Activated CD4-positive, alpha-beta T cell treated with anti-CD3 and anti-CD28 coated beads for 36 hours (primary cell): ENCODE measurements at regions of chr13 and their contacts with region 1.

Region 1: GRCh38 chr13:46184277-46184699 is 2.3 kb upstream of the LCP1 start:
- DNase-seq: peak; percentile 89
- ATAC-seq: peak; percentile 61
- H3K4me3 Mint-ChIP-seq: peak overlapping the region; percentile 97
- H3K27ac Mint-ChIP-seq: peak overlapping the region; percentile 98
- H3K4me1 Mint-ChIP-seq: peaks cover 35% of the 10 kb centered on the region
- H3K27me3 Mint-ChIP-seq: no peaks in the 10 kb centered on the region

Region 2: DNA sequence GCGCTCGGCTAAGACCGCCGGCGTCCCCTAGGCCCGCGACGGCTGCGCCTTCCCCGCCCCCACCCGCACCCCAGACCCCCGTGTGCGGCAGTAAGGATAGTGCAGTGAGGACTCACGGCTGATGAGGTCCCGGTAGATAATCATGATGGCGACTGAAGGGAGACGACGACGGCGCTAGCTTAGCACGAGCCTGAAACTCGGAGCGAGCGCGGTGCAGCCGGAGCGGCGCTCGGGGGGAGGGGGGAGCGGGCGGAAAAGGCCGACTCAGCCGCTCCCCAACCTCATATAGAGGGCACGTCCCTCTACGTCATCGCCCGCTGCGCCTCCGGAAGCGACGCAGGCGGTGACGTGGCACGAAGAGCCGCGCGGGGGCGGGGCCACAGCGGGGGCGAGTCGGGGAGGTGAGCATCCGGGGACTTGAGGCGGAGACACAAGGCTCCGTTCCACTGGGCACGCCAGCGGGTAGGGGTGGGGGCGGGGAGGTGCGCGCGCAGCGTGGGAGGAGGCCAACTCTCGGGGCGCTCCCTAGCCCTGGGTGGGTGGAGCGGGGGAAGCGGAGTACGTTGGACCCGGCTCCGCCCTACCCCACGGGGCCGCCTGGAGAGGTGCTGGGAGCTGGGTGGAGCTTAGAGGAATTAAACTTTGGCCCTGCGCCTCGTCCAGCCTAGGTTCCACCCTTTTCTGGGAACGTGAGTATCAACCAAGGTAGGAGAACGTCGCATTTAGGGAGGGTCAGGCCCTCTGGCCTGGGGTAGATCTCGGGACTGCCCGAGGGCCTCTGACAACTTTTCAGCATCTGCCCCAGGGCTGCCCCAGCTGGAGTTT is 843.1 kb before region 1 on chr13 and contains the start of gene TPT1:
- CTCF ChIA-PET with region 1: no interaction called
- POLR2A ChIA-PET with region 1: no interaction called
- intact Hi-C with region 1: loop called (anchors 10 kb)
- DNase-seq: peak; percentile 100
- ATAC-seq: peak; percentile 85
- H3K4me3 Mint-ChIP-seq: peak within 1 kb of the TSS; percentile 99
- H3K27ac Mint-ChIP-seq: peak within 1 kb of the TSS; percentile 99
- H3K4me1 Mint-ChIP-seq: peaks cover 45% of the 10 kb centered on the region
- H3K27me3 Mint-ChIP-seq: no peaks in the 10 kb centered on the region
- total RNA-seq, gene TPT1: 3,408 to 3,964 TPM

Region 3: GRCh38 chr13:45899406-45899805 is 284.9 kb before region 1 on chr13:
- CTCF ChIA-PET with region 1: no interaction called
- POLR2A ChIA-PET with region 1: no interaction called
- intact Hi-C with region 1: no loop called
- DNase-seq: no peak
- ATAC-seq: no peak
- H3K4me3 Mint-ChIP-seq: no peak overlapping the region
- H3K27ac Mint-ChIP-seq: no peak overlapping the region
- H3K4me1 Mint-ChIP-seq: no peaks in the 10 kb centered on the region
- H3K27me3 Mint-ChIP-seq: no peaks in the 10 kb centered on the region

Region 4: GRCh38 chr13:46146899-46147298 is 37.4 kb before region 1 on chr13:
- CTCF ChIA-PET with region 1: interaction called, 7 read pairs
- POLR2A ChIA-PET with region 1: interaction called, 7 read pairs
- intact Hi-C with region 1: loop called in 1 of 2 experiments (anchors 5 kb)
- DNase-seq: no peak
- ATAC-seq: no peak
- H3K4me3 Mint-ChIP-seq: no peak overlapping the region
- H3K27ac Mint-ChIP-seq: peak overlapping the region; percentile 63
- H3K4me1 Mint-ChIP-seq: peaks cover 36% of the 10 kb centered on the region
- H3K27me3 Mint-ChIP-seq: no peaks in the 10 kb centered on the region

Region 5: DNA sequence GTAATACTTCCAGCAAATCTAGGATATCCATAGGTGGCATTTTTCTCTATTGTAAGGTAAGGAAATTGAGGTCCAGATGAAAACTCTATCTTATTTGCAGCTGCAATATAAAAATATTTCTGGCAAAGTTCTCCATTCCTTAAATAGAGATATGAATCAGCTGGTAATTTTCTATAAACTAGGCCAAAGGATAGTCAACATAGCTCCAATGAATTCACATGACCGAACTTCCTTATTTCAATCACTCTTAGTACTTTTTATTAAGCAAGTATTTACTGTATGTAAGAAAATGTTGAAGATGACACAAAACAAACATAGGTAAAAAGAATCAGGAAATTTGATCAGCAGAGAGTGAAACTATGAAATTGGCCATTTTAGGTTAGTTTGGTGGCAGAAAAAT is 10.7 kb after region 1 on chr13:
- CTCF ChIA-PET with region 1: interaction called, 10 read pairs
- POLR2A ChIA-PET with region 1: interaction called, 3 read pairs
- intact Hi-C with region 1: no loop called
- DNase-seq: no peak
- ATAC-seq: no peak
- H3K4me3 Mint-ChIP-seq: no peak overlapping the region
- H3K27ac Mint-ChIP-seq: no peak overlapping the region
- H3K4me1 Mint-ChIP-seq: peaks cover 5% of the 10 kb centered on the region
- H3K27me3 Mint-ChIP-seq: no peaks in the 10 kb centered on the region

Region 6: GRCh38 chr13:46321494-46322225 is 137.4 kb after region 1 on chr13:
- CTCF ChIA-PET with region 1: interaction called, 4 read pairs
- POLR2A ChIA-PET with region 1: no interaction called
- intact Hi-C with region 1: loop called (anchors 1 to 2 kb)
- DNase-seq: peak; percentile 87
- ATAC-seq: peak; percentile 87
- H3K4me3 Mint-ChIP-seq: peak overlapping the region; percentile 77
- H3K27ac Mint-ChIP-seq: peak overlapping the region; percentile 94
- H3K4me1 Mint-ChIP-seq: peaks cover 37% of the 10 kb centered on the region
- H3K27me3 Mint-ChIP-seq: no peaks in the 10 kb centered on the region

Region 7: DNA sequence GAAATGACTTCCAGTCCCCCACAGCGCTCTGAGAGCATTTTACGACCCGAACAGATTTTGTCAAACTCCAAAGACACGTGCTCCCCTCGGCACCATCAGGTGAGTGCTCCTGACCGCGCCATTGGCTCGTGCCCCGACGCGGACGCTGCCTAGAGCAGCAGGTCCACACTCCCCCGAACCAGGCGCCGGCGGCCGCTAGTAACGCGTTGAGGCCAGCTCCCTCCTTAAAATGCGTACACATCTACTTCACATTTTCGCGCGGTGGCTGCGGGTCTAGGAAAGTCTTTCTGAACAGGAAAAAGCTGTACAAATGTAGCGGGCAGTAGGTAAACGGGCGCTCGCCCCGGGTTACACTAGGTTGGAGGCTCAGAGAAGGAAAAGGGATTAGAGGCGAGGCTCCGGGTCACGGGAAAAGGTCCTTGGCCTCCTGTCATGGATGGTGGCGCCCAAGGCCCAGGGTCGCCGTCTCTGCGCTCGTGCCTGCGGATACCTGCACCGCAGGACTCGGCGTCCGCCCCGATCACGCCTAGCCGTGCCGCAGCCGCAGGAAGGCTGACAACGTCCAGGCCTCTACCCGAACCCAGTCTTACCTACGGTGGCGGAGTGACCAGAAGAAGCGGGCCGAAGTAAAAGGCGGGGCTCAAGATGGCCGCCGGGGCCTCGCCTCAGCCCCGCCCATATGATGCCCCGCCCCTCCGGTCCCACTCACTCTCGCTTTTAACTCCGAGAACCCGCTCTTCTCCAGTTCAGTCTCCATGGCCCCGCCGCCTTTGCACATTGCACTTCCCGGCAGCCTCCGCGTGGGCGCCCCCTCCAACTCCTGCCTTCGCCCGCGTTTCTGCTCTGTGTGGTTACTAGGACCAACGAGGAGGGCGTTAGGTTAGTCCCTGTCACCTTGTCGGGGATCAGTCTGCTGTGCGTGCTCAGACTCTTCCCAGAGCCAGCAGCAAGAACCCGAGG is 612.5 kb after region 1 on chr13 and contains the start of gene ESD:
- CTCF ChIA-PET with region 1: no interaction called
- POLR2A ChIA-PET with region 1: no interaction called
- intact Hi-C with region 1: loop called in 1 of 2 experiments (anchors 10 kb)
- DNase-seq: peak; percentile 97
- ATAC-seq: peak; percentile 95
- H3K4me3 Mint-ChIP-seq: peak within 1 kb of the TSS; percentile 98
- H3K27ac Mint-ChIP-seq: peak within 1 kb of the TSS; percentile 98
- H3K4me1 Mint-ChIP-seq: peaks cover 38% of the 10 kb centered on the region
- H3K27me3 Mint-ChIP-seq: no peaks in the 10 kb centered on the region
- total RNA-seq, gene ESD: 150 to 162 TPM